Activated naive CD4-positive, alpha-beta T cell treated with anti-CD3 and anti-CD28 coated beads for 36 hours (primary cell): ENCODE measurements at regions of chr9 and their contacts with region 1.

Region 1: GRCh38 chr9:130682490-130683121 is 11.0 kb upstream of the EXOSC2 start:
- DNase-seq: peak; percentile 74
- H3K4me3 Mint-ChIP-seq: peak overlapping the region; percentile 90
- H3K27ac Mint-ChIP-seq: no peak overlapping the region
- H3K4me1 Mint-ChIP-seq: peaks cover 8% of the 10 kb centered on the region
- H3K27me3 Mint-ChIP-seq: peaks cover 8% of the 10 kb centered on the region

Region 2: GRCh38 chr9:130461218-130461630 is 221.4 kb before region 1 on chr9:
- CTCF ChIA-PET with region 1: interaction called, 46 read pairs
- intact Hi-C with region 1: loop called (anchors 1 kb)
- DNase-seq: peak; percentile 71
- H3K4me3 Mint-ChIP-seq: no peak overlapping the region
- H3K27ac Mint-ChIP-seq: no peak overlapping the region
- H3K4me1 Mint-ChIP-seq: no peaks in the 10 kb centered on the region
- H3K27me3 Mint-ChIP-seq: peaks cover 11% of the 10 kb centered on the region

Region 3: GRCh38 chr9:130624154-130624553 is 58.5 kb before region 1 on chr9:
- CTCF ChIA-PET with region 1: no interaction called
- intact Hi-C with region 1: no loop called
- DNase-seq: no peak
- H3K4me3 Mint-ChIP-seq: no peak overlapping the region
- H3K27ac Mint-ChIP-seq: no peak overlapping the region
- H3K4me1 Mint-ChIP-seq: no peaks in the 10 kb centered on the region
- H3K27me3 Mint-ChIP-seq: no peaks in the 10 kb centered on the region

Region 4: GRCh38 chr9:130662099-130662969 is 20.3 kb before region 1 on chr9:
- CTCF ChIA-PET with region 1: interaction called, 3 read pairs
- intact Hi-C with region 1: loop called (anchors 1 kb)
- DNase-seq: no peak
- H3K4me3 Mint-ChIP-seq: no peak overlapping the region
- H3K27ac Mint-ChIP-seq: no peak overlapping the region
- H3K4me1 Mint-ChIP-seq: peaks cover 31% of the 10 kb centered on the region
- H3K27me3 Mint-ChIP-seq: peaks cover 66% of the 10 kb centered on the region

Region 5: DNA sequence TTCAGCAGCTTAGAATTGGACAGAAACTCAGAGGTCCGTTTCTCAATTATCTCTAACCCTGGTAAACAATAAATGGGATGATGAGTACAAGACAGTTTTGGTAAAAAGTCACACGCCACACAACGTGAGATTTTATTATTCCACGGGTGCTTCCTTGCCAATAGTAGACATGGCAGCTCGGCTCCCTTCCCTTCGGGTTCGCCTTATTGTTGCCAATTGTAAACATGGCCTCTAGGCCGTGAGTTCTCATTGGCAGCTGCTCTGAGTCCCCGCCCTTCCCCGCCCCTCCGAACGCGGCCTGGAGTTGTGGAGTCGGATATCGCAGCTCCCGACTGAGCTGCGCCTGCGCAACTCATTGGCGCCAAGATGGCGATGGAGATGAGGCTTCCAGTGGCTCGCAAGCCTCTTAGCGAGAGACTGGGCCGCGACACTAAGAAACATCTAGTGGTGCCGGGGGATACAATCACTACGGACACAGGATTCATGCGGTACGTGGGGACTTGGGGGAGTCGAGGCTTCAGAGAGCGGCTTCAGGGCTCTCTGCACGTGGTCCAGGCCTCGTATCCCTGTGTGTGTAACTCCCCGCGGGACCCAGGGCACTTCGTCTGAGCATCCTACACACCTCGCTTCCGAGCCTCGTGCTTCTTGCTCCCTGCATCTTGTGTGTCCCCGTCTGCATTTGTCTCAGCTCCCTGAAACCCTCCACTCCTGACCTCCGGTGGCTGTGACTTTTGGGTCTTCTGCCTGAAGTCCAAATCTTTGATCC is 11.0 kb after region 1 on chr9 and contains the start of gene EXOSC2:
- CTCF ChIA-PET with region 1: interaction called, 21 read pairs
- intact Hi-C with region 1: loop called (anchors 1 kb)
- DNase-seq: peak; percentile 99
- H3K4me3 Mint-ChIP-seq: peak within 1 kb of the TSS; percentile 90
- H3K27ac Mint-ChIP-seq: peak within 1 kb of the TSS; percentile 87
- H3K4me1 Mint-ChIP-seq: peaks cover 38% of the 10 kb centered on the region
- H3K27me3 Mint-ChIP-seq: no peaks in the 10 kb centered on the region
- total RNA-seq, gene EXOSC2: 70.1 to 72.6 TPM

Region 6: GRCh38 chr9:130701056-130702022 is 18.7 kb after region 1 on chr9:
- CTCF ChIA-PET with region 1: interaction called, 20 read pairs
- intact Hi-C with region 1: no loop called
- DNase-seq: peak; percentile 79
- H3K4me3 Mint-ChIP-seq: no peak overlapping the region
- H3K27ac Mint-ChIP-seq: no peak overlapping the region
- H3K4me1 Mint-ChIP-seq: peaks cover 25% of the 10 kb centered on the region
- H3K27me3 Mint-ChIP-seq: no peaks in the 10 kb centered on the region

Region 7: DNA sequence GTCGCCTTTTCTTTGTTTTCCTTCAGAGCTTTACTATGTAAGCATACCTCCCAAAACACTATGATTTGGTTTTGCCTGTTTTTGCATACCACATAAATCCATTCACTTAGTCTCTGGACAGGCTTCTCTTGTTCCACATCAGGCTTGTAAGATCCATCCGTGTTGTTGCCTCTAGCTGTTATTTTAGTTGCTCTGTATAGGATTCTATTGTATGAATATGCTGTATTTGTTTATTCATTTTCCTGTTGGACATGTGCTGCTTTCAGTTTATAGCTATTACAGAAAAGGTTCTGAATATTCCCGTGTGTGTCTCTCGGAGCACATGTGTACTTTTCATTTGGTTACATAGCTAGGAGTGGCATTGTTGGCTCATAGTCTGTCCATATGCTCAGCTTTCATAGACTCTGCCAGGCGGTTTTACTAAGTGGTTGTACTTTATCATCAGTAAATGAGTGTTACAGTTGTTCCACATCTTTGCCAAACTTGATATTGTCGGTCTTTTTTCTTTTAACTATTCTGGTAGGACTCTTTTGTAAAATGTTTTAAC is 484.6 kb after region 1 on chr9:
- CTCF ChIA-PET with region 1: no interaction called
- intact Hi-C with region 1: no loop called
- DNase-seq: no peak
- H3K4me3 Mint-ChIP-seq: no peak overlapping the region
- H3K27ac Mint-ChIP-seq: no peak overlapping the region
- H3K4me1 Mint-ChIP-seq: no peaks in the 10 kb centered on the region
- H3K27me3 Mint-ChIP-seq: no peaks in the 10 kb centered on the region